ENCODE measurements at regions of chr1 and their contacts with region 1.

Region 1: GRCh38 chr1:117077267-117077666 is 17.1 kb downstream of the TTF2 start:
- DNase-seq: no peak
- ATAC-seq: no peak
- H3K4me3 ChIP-seq: no peak overlapping the region
- H3K27ac ChIP-seq: no peak overlapping the region
- H3K4me1 ChIP-seq: no peaks in the 10 kb centered on the region
- H3K27me3 ChIP-seq: no peaks in the 10 kb centered on the region
- CTCF ChIP-seq: no peak

Region 2: DNA sequence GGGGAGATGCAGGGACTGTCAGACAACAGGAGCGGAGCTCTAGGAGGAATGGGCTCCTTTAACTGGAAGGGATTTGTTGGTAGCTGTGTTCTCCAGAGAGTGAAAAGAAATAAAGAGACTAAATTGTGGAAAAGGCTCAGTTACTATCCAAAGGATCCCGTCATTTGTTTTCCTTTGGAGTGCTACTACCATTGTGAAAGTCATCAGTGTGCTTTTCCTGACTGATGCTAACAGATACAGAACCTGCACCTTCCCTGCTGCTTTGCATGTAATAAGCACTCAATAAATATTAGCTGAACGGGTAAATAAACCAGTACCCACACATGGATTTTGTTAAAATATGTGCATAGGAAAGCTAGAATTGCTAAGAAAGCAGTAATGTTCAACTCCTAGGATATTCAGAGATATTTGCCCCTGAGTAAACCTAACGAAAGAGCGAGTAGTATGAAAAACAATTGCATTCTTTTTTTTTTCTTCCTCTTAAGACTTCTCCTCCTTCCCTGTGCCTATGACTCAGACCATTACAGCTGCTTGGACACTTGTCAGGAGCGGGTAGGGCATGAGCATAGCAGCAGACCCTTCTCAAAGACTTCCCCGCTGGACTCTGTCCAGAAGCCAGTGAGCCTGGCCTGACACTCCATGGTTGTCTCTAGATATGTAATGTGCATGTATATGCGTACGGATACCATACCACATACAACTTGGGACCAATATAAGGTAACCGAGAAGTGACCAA is 125.9 kb before region 1 on chr1:
- intact Hi-C with region 1: no loop called
- DNase-seq: no peak
- ATAC-seq: peak in 2 of 4 donors; percentile 38 to 59
- H3K4me3 ChIP-seq: no peak overlapping the region
- H3K27ac ChIP-seq: no peak overlapping the region
- H3K4me1 ChIP-seq: no peaks in the 10 kb centered on the region
- H3K27me3 ChIP-seq: no peaks in the 10 kb centered on the region
- CTCF ChIP-seq: no peak

Region 3: GRCh38 chr1:117026361-117026760 is 50.9 kb before region 1 on chr1:
- intact Hi-C with region 1: no loop called
- DNase-seq: no peak
- ATAC-seq: no peak
- H3K4me3 ChIP-seq: no peak overlapping the region
- H3K27ac ChIP-seq: peak overlapping the region in 1 of 4 donors; percentile 6
- H3K4me1 ChIP-seq: no peaks in the 10 kb centered on the region
- H3K27me3 ChIP-seq: no peaks in the 10 kb centered on the region
- CTCF ChIP-seq: no peak

Region 4: DNA sequence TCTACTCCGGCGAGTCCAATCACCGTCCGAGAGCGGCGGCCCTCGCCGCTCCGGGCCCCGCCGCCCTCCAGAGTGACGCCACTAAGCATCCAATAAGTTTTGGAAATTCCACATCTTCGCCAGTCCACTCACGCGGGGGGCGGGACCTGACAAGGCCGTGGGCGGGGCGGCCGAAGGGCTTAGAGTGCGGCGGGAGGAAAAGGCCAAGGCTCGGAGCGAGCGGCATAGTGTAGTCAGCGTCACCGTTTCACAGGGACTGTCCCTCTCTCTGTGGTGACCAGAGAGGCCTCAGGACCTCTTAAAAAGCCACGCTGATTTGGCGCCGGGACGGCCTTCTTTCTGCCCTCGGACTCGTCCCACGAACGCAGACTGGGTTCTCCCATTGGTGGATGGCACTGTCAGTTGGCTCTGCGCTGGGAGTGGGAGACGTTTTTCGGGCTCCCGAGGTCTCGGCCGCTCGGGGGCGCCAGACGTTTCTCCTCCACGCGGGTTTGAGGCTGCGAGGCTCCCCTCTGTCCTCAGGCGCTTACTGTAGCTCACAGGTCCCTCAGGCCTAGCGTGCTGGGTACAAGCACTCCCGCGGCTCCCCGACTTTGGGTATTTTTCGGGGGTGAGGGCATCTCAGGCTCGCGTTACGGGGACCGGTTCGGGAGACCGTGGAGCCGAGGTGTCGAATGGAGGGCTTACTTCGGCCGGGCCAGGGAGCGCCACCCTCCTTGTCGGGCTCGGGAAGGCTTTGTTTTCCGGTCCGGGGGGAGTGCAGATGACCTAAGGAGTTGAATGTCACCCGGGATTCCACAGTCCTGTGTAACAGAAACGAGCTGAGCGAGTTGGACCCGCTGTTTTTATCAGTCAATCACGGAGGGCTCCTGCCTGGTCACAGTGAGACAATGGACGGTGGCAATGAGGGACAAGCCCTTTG is 44.8 kb after region 1 on chr1:
- intact Hi-C with region 1: loop called in 1 of 3 experiments (anchors 10 kb)
- DNase-seq: peak; percentile 96 to 97 (median 97)
- ATAC-seq: peak; percentile 90 to 97 (median 94)
- H3K4me3 ChIP-seq: peak overlapping the region; percentile 46 to 62 (median 57)
- H3K27ac ChIP-seq: peak overlapping the region; percentile 86 to 96 (median 91)
- H3K4me1 ChIP-seq: peaks cover 4 to 14% (median 8%) of the 10 kb centered on the region in 3 donors
- H3K27me3 ChIP-seq: no peaks in the 10 kb centered on the region
- CTCF ChIP-seq: peak; percentile 41 to 67 (median 52)

Region 5: GRCh38 chr1:117290890-117291289 is 213.6 kb after region 1 on chr1:
- intact Hi-C with region 1: loop called in 2 of 3 experiments (anchors 10 kb)
- DNase-seq: no peak
- ATAC-seq: no peak
- H3K4me3 ChIP-seq: no peak overlapping the region
- H3K27ac ChIP-seq: no peak overlapping the region
- H3K4me1 ChIP-seq: no peaks in the 10 kb centered on the region
- H3K27me3 ChIP-seq: no peaks in the 10 kb centered on the region
- CTCF ChIP-seq: no peak